ENCODE measurements at regions of chr3 and their contacts with region 1.

Region 1: DNA sequence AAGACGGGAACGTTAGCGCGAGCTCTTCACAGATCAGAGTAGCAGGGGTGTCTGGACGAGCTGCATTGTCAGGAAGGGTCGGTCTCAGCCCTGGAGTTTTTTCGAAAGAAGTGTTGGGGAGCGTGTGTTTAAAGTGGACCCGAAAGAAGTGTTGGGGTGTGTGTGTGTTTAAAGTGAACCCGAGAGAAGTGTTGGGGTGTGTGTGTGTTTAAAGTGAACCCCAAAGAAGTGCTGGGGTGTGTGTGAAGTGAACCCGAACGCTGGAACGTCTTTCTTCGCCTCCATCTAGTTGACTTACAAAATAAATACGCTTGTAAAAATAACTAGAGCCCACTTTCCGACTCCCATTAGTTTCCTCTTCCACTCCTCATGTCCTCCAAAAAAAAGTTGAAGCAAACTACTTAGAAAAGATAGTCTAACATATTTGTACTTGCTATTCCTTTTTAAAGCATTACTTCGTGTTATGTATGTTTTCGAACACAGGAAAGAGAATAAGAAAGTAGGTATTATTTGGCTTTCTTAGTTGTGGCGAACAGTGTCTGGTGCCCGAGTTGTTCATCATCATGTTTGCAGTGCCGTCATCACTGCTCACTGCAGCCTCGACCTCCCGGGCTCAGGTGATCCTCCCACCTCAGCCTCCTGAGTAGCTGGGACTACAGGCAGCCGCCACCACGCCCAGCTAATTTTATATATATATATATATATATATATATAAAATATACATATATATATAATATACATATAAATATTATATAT is 1.0 kb downstream of the LRCH3 start:
- DNase-seq: peak; percentile 63
- H3K4me3 Mint-ChIP-seq: peak overlapping the region; percentile 81
- H3K27ac Mint-ChIP-seq: peak overlapping the region; percentile 92
- H3K4me1 Mint-ChIP-seq: peaks cover 45% of the 10 kb centered on the region
- H3K27me3 Mint-ChIP-seq: no peaks in the 10 kb centered on the region

Region 2: GRCh38 chr3:197354319-197355001 is 437.6 kb before region 1 on chr3:
- CTCF ChIA-PET with region 1: no interaction called
- intact Hi-C with region 1: no loop called
- DNase-seq: no peak
- H3K4me3 Mint-ChIP-seq: no peak overlapping the region
- H3K27ac Mint-ChIP-seq: no peak overlapping the region
- H3K4me1 Mint-ChIP-seq: no peaks in the 10 kb centered on the region
- H3K27me3 Mint-ChIP-seq: no peaks in the 10 kb centered on the region

Region 3: GRCh38 chr3:197749601-197750395 is 42.3 kb before region 1 on chr3 and contains the start of gene FYTTD1:
- CTCF ChIA-PET with region 1: interaction called, 3 read pairs
- intact Hi-C with region 1: loop called (anchors 1 kb)
- DNase-seq: peak; percentile 81
- H3K4me3 Mint-ChIP-seq: peak within 1 kb of the TSS; percentile 93
- H3K27ac Mint-ChIP-seq: peak within 1 kb of the TSS; percentile 83
- H3K4me1 Mint-ChIP-seq: peaks cover 30% of the 10 kb centered on the region
- H3K27me3 Mint-ChIP-seq: no peaks in the 10 kb centered on the region
- total RNA-seq, gene FYTTD1: 25.1 to 27.6 TPM

Region 4: GRCh38 chr3:197761784-197762183 is 30.3 kb before region 1 on chr3:
- CTCF ChIA-PET with region 1: no interaction called
- intact Hi-C with region 1: no loop called
- DNase-seq: no peak
- H3K4me3 Mint-ChIP-seq: no peak overlapping the region
- H3K27ac Mint-ChIP-seq: no peak overlapping the region
- H3K4me1 Mint-ChIP-seq: no peaks in the 10 kb centered on the region
- H3K27me3 Mint-ChIP-seq: no peaks in the 10 kb centered on the region

Region 5: DNA sequence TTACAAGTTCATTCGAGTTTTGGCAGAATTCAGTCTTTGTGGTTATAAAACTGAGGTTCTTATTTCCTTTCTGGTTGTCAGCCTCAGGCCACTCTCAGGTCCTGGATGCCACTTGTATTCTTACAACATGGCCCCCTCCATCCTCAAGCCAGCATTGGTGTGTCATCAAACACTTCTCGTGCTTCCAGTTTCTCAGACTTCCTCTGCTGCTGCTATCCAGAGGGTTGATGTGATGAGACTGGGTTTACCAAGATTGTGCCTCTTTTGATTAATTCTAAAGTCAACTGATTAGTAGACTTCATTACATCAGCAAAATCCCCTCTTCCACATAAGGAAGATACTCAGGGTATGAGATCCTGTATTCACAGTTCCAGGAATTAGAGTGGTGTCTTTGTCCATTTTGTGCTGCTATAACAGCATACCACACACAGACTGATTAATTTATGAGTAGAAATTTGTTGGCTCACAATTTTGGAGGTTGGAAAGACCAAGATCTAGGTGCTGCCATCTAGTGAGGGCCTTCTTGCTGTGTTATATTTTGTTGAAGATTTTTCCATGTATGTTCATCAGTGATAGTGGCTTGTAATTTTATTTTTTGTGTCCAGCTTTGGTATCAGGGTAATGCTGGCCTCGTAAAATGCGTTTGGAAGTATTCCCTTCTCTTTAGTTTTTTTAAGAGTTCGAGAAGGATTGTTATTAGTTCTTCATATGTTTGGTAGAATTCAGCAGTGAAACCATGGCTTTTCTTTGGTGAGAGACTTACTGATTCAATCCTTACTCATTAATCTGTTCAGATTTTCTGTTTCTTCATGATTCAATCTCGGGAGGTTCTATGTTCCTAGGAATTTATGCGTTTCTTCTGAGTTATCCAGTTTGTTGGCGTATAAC is 10.1 kb after region 1 on chr3:
- CTCF ChIA-PET with region 1: interaction called, 5 read pairs
- intact Hi-C with region 1: loop called (anchors 1 kb)
- DNase-seq: peak; percentile 59
- H3K4me3 Mint-ChIP-seq: no peak overlapping the region
- H3K27ac Mint-ChIP-seq: peak overlapping the region; percentile 46
- H3K4me1 Mint-ChIP-seq: peaks cover 53% of the 10 kb centered on the region
- H3K27me3 Mint-ChIP-seq: no peaks in the 10 kb centered on the region

Region 6: GRCh38 chr3:197847866-197848401 is 55.9 kb after region 1 on chr3:
- CTCF ChIA-PET with region 1: no interaction called
- intact Hi-C with region 1: loop called (anchors 1 kb)
- DNase-seq: peak; percentile 59
- H3K4me3 Mint-ChIP-seq: peak overlapping the region; percentile 58
- H3K27ac Mint-ChIP-seq: peak overlapping the region; percentile 90
- H3K4me1 Mint-ChIP-seq: peaks cover 23% of the 10 kb centered on the region
- H3K27me3 Mint-ChIP-seq: no peaks in the 10 kb centered on the region

Region 7: DNA sequence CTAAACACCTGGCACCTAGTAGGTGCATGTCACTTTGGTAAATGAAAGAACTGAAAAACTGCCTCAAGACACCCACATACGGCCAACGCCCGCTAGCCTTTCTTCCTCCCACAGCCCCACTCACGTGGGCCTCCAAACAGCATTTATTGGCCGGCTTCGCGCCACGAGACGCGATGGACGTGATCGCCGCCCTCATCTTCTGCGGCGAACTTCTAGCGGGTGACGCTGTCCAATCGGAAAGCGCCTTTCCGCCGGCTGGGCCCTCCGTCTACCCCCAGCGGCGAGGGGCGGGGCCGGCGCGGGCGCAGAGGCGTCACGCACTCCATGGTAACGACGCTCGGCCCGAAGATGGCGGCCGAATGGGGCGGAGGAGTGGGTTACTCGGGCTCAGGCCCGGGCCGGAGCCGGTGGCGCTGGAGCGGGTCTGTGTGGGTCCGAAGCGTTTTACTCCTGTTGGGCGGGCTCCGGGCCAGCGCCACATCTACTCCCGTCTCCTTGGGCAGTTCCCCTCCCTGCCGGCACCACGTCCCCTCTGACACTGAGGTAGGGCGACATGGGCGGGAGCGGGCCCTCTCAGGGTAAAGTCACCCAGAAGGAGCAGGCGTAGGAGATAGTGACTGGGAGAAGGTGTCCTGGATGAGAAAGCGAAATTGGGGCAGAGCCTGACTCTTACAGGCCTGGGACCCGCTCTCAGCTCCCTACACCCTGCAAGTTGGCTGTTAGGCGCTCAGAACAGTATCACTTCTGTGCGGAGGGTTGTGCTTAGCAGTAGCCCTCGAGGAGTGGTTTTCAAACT is 168.0 kb after region 1 on chr3 and contains the start of gene LMLN:
- CTCF ChIA-PET with region 1: no interaction called
- intact Hi-C with region 1: loop called (anchors 2 kb)
- DNase-seq: peak; percentile 95
- H3K4me3 Mint-ChIP-seq: peak within 1 kb of the TSS; percentile 85
- H3K27ac Mint-ChIP-seq: peak within 1 kb of the TSS; percentile 88
- H3K4me1 Mint-ChIP-seq: peaks cover 43% of the 10 kb centered on the region
- H3K27me3 Mint-ChIP-seq: no peaks in the 10 kb centered on the region
- total RNA-seq, gene LMLN: 2.1 to 2.2 TPM